Panc1 (cell line): ENCODE measurements at regions of chr13 and their contacts with region 1.

Region 1: GRCh38 chr13:20495082-20496023 is 30.3 kb downstream of the CRYL1 start:
- DNase-seq: peak; percentile 42
- ATAC-seq: peak; percentile 91
- H3K4me3 ChIP-seq: no peak overlapping the region
- H3K27ac ChIP-seq: no peak overlapping the region
- H3K4me1 ChIP-seq: no peaks in the 10 kb centered on the region
- H3K27me3 ChIP-seq: no peaks in the 10 kb centered on the region
- CTCF ChIP-seq: peak; percentile 86

Region 2: GRCh38 chr13:20703780-20704445 is 208.6 kb after region 1 on chr13:
- CTCF ChIA-PET with region 1: no interaction called
- POLR2A ChIA-PET with region 1: no interaction called
- in situ Hi-C with region 1: no loop called
- intact Hi-C with region 1: loop called (anchors 5 kb)
- DNase-seq: no peak
- ATAC-seq: peak; percentile 94
- H3K4me3 ChIP-seq: peak overlapping the region; percentile 23 to 54; a peak in 3 of 4 replicates
- H3K27ac ChIP-seq: no peak overlapping the region
- H3K4me1 ChIP-seq: no peaks in the 10 kb centered on the region; the same call in 1 of the 2 replicates
- H3K27me3 ChIP-seq: peaks cover 3% of the 10 kb centered on the region; the same call in 1 of the 2 replicates
- CTCF ChIP-seq: peak; percentile 53

Region 3: GRCh38 chr13:20721454-20722357 is 226.4 kb after region 1 on chr13:
- CTCF ChIA-PET with region 1: interaction called, 11 read pairs
- POLR2A ChIA-PET with region 1: no interaction called
- in situ Hi-C with region 1: no loop called
- intact Hi-C with region 1: no loop called
- DNase-seq: no peak
- ATAC-seq: no peak
- H3K4me3 ChIP-seq: no peak overlapping the region; a peak in 1 of 4 replicates
- H3K27ac ChIP-seq: no peak overlapping the region
- H3K4me1 ChIP-seq: no peaks in the 10 kb centered on the region
- H3K27me3 ChIP-seq: no peaks in the 10 kb centered on the region
- CTCF ChIP-seq: no peak

Region 4: DNA sequence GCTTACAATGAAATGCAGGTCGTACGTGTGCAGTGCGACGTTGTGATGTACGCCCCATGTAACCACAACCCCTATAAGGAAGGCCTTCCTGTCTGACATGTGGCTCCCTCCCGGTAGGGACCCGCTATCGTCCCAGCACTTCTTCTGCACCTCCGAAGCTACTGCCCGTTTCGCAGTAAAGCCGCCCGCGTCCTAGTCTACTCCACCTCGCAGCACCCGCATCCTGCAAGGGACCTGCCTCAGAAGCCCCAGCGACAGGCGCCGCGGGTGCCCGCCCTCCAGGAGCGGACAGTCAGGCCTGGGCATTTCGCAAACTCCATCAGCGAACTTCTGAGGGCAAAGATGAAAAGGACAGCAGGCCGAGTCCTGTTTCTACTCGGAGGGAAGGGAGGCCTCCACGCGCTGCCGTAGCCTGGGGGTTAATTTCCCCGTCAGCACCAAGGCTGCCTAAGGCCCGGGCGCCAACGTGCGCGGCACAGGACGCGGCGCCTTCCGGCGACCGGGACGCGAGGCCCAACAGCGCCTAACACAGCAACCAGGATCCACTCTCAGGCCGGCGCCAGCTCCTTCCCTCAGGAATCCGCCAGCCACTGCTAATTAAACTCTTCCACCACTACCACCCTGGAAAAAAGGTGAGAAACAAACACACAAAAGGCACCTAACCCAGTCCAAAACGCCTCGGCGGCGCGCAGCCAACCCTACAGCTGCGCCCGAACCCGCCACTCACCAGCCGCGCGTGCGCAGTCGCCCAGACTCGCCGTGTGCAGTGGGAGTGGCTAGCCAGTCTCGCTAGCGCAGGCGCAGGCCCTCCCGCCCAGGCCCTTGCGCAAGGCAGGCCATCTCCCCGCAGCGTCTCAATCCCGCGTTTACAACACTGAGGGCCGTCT is 278.1 kb after region 1 on chr13 and contains the start of gene EEF1AKMT1:
- CTCF ChIA-PET with region 1: no interaction called
- POLR2A ChIA-PET with region 1: no interaction called
- in situ Hi-C with region 1: no loop called
- intact Hi-C with region 1: loop called (anchors 10 kb)
- DNase-seq: peak; percentile 25
- ATAC-seq: peak; percentile 97
- H3K4me3 ChIP-seq: peak within 1 kb of the TSS; percentile 62 to 63
- H3K27ac ChIP-seq: peak within 1 kb of the TSS; percentile 90
- H3K4me1 ChIP-seq: 0 out of 2 replicates have a peak, but pooled peaks cover 2% of the 10 kb centered on the region
- H3K27me3 ChIP-seq: no peaks in the 10 kb centered on the region
- CTCF ChIP-seq: no peak
- total RNA-seq, gene EEF1AKMT1: 5.4 TPM

Region 5: GRCh38 chr13:20831933-20832332 is 336.6 kb after region 1 on chr13:
- CTCF ChIA-PET with region 1: no interaction called
- POLR2A ChIA-PET with region 1: no interaction called
- in situ Hi-C with region 1: no loop called
- intact Hi-C with region 1: loop called (anchors 10 kb)
- DNase-seq: no peak
- ATAC-seq: no peak
- H3K4me3 ChIP-seq: no peak overlapping the region
- H3K27ac ChIP-seq: no peak overlapping the region
- H3K4me1 ChIP-seq: no peaks in the 10 kb centered on the region; the same call in 1 of the 2 replicates
- H3K27me3 ChIP-seq: no peaks in the 10 kb centered on the region
- CTCF ChIP-seq: no peak

Region 6: GRCh38 chr13:20924758-20925394 is 429.5 kb after region 1 on chr13:
- CTCF ChIA-PET with region 1: interaction called, 4 read pairs
- POLR2A ChIA-PET with region 1: no interaction called
- in situ Hi-C with region 1: no loop called
- intact Hi-C with region 1: loop called (anchors 2 kb)
- DNase-seq: no peak
- ATAC-seq: peak; percentile 82; the same call in 1 of the 2 replicates
- H3K4me3 ChIP-seq: no peak overlapping the region
- H3K27ac ChIP-seq: no peak overlapping the region
- H3K4me1 ChIP-seq: no peaks in the 10 kb centered on the region
- H3K27me3 ChIP-seq: no peaks in the 10 kb centered on the region
- CTCF ChIP-seq: peak; percentile 78